ENCODE measurements at regions of chr4 and their contacts with region 1.

Region 1: GRCh38 chr4:108172753-108173598 is 4.2 kb upstream of the LEF1 start:
- DNase-seq: peak; percentile 51 to 87 (median 70)
- ATAC-seq: peak; percentile 39
- H3K4me3 ChIP-seq: peak overlapping the region; percentile 85
- H3K4me3 Mint-ChIP-seq: peak overlapping the region; percentile 93
- H3K27ac ChIP-seq: peak overlapping the region; percentile 46 to 91
- H3K27ac Mint-ChIP-seq: peak overlapping the region; percentile 88
- H3K4me1 ChIP-seq: peaks cover 50% of the 10 kb centered on the region
- H3K4me1 Mint-ChIP-seq: peaks cover 67% of the 10 kb centered on the region
- H3K27me3 ChIP-seq: peaks cover 7 to 11% of the 10 kb centered on the region in 2 experiments
- H3K27me3 Mint-ChIP-seq: peaks cover 9% of the 10 kb centered on the region
- CTCF ChIP-seq: no peak

Region 2: DNA sequence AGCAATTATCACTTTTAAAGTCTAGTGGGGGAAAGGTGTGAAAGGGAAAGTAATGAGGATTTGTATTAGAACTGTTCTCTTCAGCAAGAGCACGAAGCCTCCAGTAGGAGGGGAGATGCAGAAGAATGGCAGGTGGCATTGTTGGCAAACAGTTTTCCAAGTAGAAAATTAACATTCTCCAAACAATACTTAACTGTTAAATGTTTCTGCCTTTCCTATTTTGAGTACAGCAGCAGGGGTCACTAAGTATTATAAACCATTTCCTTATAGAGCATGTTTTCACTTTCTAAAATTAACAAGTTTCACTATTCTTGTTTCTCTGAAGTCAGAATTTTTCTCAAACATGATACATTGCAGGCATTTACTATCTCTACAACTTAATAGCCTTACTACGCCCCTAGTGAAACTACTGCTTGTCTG is 63.0 kb before region 1 on chr4:
- CTCF ChIA-PET with region 1: interaction called, 3 read pairs
- POLR2A ChIA-PET with region 1: interaction called, 65 read pairs
- intact Hi-C with region 1: loop called (anchors 2 to 10 kb)
- DNase-seq: peak in 1 of 14 experiments; percentile 10
- ATAC-seq: no peak
- H3K4me3 ChIP-seq: peak overlapping the region; percentile 2
- H3K4me3 Mint-ChIP-seq: peak overlapping the region; percentile 73
- H3K27ac ChIP-seq: peak overlapping the region; percentile 48 to 89
- H3K27ac Mint-ChIP-seq: peak overlapping the region; percentile 92
- H3K4me1 ChIP-seq: peaks cover 85% of the 10 kb centered on the region
- H3K4me1 Mint-ChIP-seq: peaks cover 95% of the 10 kb centered on the region
- H3K27me3 ChIP-seq: no peaks in the 10 kb centered on the region
- H3K27me3 Mint-ChIP-seq: no peaks in the 10 kb centered on the region
- CTCF ChIP-seq: no peak

Region 3: GRCh38 chr4:108141213-108141950 is 31.6 kb before region 1 on chr4:
- CTCF ChIA-PET with region 1: interaction called, 7 read pairs
- POLR2A ChIA-PET with region 1: interaction called, 229 read pairs
- intact Hi-C with region 1: no loop called
- DNase-seq: peak in 3 of 14 experiments; percentile 26 to 41 (median 31)
- ATAC-seq: peak; percentile 18
- H3K4me3 ChIP-seq: peak overlapping the region; percentile 12
- H3K4me3 Mint-ChIP-seq: peak overlapping the region; percentile 74
- H3K27ac ChIP-seq: peak overlapping the region; percentile 10 to 67
- H3K27ac Mint-ChIP-seq: peak overlapping the region; percentile 98
- H3K4me1 ChIP-seq: peaks cover 47% of the 10 kb centered on the region
- H3K4me1 Mint-ChIP-seq: peaks cover 95% of the 10 kb centered on the region
- H3K27me3 ChIP-seq: no peaks in the 10 kb centered on the region
- H3K27me3 Mint-ChIP-seq: no peaks in the 10 kb centered on the region
- CTCF ChIP-seq: no peak

Region 4: GRCh38 chr4:108160741-108161352 is 12.1 kb before region 1 on chr4:
- CTCF ChIA-PET with region 1: interaction called, 7 read pairs
- POLR2A ChIA-PET with region 1: interaction called, 148 read pairs
- intact Hi-C with region 1: no loop called
- DNase-seq: peak in 3 of 14 experiments; percentile 54 to 60 (median 59)
- ATAC-seq: peak; percentile 45
- H3K4me3 ChIP-seq: peak overlapping the region; percentile 76
- H3K4me3 Mint-ChIP-seq: peak overlapping the region; percentile 87
- H3K27ac ChIP-seq: peak overlapping the region; percentile 7 to 36
- H3K27ac Mint-ChIP-seq: peak overlapping the region; percentile 79
- H3K4me1 ChIP-seq: peaks cover 22% of the 10 kb centered on the region
- H3K4me1 Mint-ChIP-seq: peaks cover 71% of the 10 kb centered on the region
- H3K27me3 ChIP-seq: no peaks in the 10 kb centered on the region
- H3K27me3 Mint-ChIP-seq: no peaks in the 10 kb centered on the region
- CTCF ChIP-seq: no peak

Region 5: DNA sequence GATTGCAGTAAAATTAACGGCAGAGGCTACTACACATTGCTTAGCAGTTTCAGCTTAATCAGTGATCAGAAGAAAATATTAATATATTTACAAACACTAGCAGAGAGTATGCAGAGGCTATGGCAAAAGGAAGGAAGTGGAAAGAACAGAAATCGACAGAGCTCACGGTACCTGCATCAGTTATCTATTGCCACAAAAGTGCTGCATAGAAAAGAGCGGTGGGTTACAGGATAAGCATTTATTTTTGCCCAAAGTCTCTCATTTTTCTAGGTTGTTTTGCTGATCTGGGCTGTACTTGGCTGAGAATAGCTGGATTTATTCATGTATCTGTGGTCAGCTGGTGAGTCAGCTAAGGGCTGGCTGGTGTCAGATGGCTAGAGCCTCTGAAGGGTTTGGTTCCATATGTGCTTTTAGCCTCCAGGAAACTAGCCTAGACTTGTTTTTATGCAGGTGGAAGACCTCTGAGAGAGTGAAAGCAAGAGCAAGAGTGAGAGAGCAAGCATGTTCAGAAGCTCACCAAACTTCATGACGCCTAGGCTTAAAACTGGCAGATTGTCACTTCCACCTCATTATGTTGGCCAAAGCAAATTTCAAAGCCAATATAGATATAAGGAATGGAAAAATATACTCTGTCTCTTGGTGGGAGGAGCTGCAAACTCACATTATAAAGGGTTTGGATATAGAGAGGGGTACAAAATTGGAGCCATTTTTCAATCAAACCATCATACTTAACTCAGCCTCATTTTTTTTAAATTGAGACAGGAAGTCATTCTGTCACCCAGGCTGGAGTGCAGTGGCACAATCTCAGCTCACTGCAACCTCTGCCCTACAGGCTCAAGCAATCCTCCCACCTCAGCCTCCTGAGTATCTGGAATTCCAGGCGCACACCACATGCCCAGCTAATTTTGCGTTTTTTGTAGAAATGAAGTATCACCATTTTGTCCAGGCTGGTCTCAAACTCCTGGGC is 294.2 kb after region 1 on chr4:
- CTCF ChIA-PET with region 1: no interaction called
- POLR2A ChIA-PET with region 1: interaction called, 5 read pairs
- intact Hi-C with region 1: loop called in 1 of 2 experiments (anchors 5 kb)
- DNase-seq: peak in 5 of 14 experiments; percentile 3 to 47 (median 36)
- ATAC-seq: peak; percentile 84
- H3K4me3 ChIP-seq: peak overlapping the region; percentile 1
- H3K4me3 Mint-ChIP-seq: peak overlapping the region; percentile 82
- H3K27ac ChIP-seq: peak overlapping the region; percentile 17 to 18
- H3K27ac Mint-ChIP-seq: peak overlapping the region; percentile 88
- H3K4me1 ChIP-seq: peaks cover 18% of the 10 kb centered on the region
- H3K4me1 Mint-ChIP-seq: peaks cover 46% of the 10 kb centered on the region
- H3K27me3 ChIP-seq: no peaks in the 10 kb centered on the region
- H3K27me3 Mint-ChIP-seq: no peaks in the 10 kb centered on the region
- CTCF ChIP-seq: no peak

Region 6: DNA sequence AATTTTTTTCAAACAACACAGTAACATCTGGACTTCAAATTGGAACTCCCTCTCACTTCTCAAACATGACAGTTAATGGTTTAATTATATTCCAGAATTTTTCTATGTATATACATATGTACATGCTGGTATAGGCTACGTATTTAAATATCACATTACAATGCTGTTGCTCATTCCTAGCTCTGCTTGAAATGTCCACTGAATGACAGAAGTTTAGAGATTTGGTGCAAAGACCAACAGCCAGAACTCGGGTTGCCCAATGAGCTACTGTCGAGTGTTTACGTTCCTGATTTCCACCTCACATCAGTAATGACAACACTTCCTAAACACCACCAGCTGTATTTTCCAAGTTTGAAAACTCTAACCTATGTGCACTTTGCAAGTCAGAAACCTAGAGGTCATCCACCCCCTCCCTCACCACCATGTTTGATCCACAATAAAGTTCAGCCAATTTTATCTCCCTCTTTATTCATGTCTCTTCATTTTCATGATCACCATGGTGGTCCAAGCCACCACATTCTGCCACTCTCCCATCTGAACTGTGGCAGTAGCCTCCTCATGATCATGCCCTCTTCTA is 398.1 kb after region 1 on chr4:
- CTCF ChIA-PET with region 1: interaction called, 7 read pairs
- POLR2A ChIA-PET with region 1: interaction called, 16 read pairs
- intact Hi-C with region 1: loop called (anchors 2 to 5 kb)
- DNase-seq: no peak
- ATAC-seq: no peak
- H3K4me3 ChIP-seq: no peak overlapping the region
- H3K4me3 Mint-ChIP-seq: no peak overlapping the region
- H3K27ac ChIP-seq: no peak overlapping the region
- H3K27ac Mint-ChIP-seq: no peak overlapping the region
- H3K4me1 ChIP-seq: peaks cover 9% of the 10 kb centered on the region
- H3K4me1 Mint-ChIP-seq: peaks cover 33% of the 10 kb centered on the region
- H3K27me3 ChIP-seq: no peaks in the 10 kb centered on the region
- H3K27me3 Mint-ChIP-seq: no peaks in the 10 kb centered on the region
- CTCF ChIP-seq: no peak